ENCODE measurements at regions of chr9 and their contacts with region 1.

Region 1: GRCh38 chr9:127943731-127944144 is 6.1 kb upstream of the DPM2 start:
- DNase-seq: peak; percentile 92
- H3K4me3 ChIP-seq: peak overlapping the region in 1 of 2 experiments; percentile 16; a peak in 1 of 4 replicates
- H3K27ac ChIP-seq: peak overlapping the region in 1 of 2 experiments; percentile 62; a peak in 1 of 4 replicates
- H3K4me1 ChIP-seq: peaks cover 0 to 50% of the 10 kb centered on the region in 2 experiments; a peak in 1 of 4 replicates
- H3K27me3 ChIP-seq: no peaks in the 10 kb centered on the region
- CTCF ChIP-seq: peak; percentile 90
- EP300 ChIP-seq: no peak
- RAD21 ChIP-seq: peak; percentile 91

Region 2: DNA sequence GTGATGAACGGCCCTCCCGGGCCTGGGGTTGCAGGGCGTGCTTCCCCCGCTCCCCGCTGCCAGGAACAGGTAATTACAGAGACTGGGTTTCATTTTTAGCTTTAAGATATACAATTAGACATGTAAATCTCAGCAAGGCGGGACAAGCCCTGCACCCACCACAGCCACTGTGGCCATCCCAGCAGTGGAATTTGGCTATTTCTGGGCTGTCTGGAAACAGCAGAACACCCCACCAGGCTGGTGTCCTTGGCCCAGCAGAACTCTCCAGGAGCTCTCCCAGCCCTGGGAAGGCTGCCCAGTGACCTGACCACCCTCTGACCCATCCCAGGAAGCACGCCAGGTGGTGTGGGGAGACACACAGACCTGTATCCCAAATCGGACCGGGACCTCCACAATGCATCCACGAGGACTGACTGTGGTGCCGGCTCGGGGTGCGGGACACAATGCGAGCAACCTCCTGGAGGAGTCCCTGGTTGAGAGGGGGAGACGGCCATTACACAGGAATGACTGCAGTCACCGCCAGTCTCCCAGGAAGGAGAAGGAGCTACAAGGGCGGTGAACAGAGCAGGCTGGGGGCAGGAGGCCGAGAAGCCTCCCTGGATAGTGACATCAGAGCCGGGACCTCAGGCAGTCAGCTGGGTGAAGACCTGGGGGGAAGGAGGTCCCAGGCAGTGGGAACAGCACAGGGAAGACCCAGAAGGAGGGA is 19.8 kb after region 1 on chr9:
- CTCF ChIA-PET with region 1: interaction called, 106 read pairs
- POLR2A ChIA-PET with region 1: interaction called, 3 read pairs
- DNase-seq: no peak
- H3K4me3 ChIP-seq: no peak overlapping the region
- H3K27ac ChIP-seq: peak overlapping the region in 1 of 2 experiments; percentile 72; a peak in 3 of 4 replicates
- H3K4me1 ChIP-seq: peaks cover 56 to 80% of the 10 kb centered on the region in 2 experiments
- H3K27me3 ChIP-seq: no peaks in the 10 kb centered on the region
- CTCF ChIP-seq: no peak
- EP300 ChIP-seq: no peak
- RAD21 ChIP-seq: no peak

Region 3: GRCh38 chr9:127980706-127981558 is 37.2 kb after region 1 on chr9 and contains the start of gene EEIG1:
- CTCF ChIA-PET with region 1: interaction called, 60 read pairs
- POLR2A ChIA-PET with region 1: interaction called, 3 read pairs
- DNase-seq: peak; percentile 98
- H3K4me3 ChIP-seq: peak within 1 kb of the TSS; percentile 72 to 96
- H3K27ac ChIP-seq: peak within 1 kb of the TSS; percentile 77 to 81
- H3K4me1 ChIP-seq: peaks cover 16 to 39% of the 10 kb centered on the region in 2 experiments; a peak in 3 of 4 replicates
- H3K27me3 ChIP-seq: no peaks in the 10 kb centered on the region
- CTCF ChIP-seq: no peak
- EP300 ChIP-seq: no peak
- RAD21 ChIP-seq: no peak
- polyA plus RNA-seq, gene EEIG1: 17.9 and 26.2 TPM in 2 replicates

Region 4: GRCh38 chr9:128007566-128008138 is 63.9 kb after region 1 on chr9:
- CTCF ChIA-PET with region 1: interaction called, 19 read pairs
- POLR2A ChIA-PET with region 1: no interaction called
- DNase-seq: peak; percentile 30
- H3K4me3 ChIP-seq: no peak overlapping the region
- H3K27ac ChIP-seq: peak overlapping the region; percentile 27 to 41; a peak in 3 of 4 replicates
- H3K4me1 ChIP-seq: peaks cover 9 to 23% of the 10 kb centered on the region in 2 experiments; a peak in 3 of 4 replicates
- H3K27me3 ChIP-seq: no peaks in the 10 kb centered on the region
- CTCF ChIP-seq: no peak
- EP300 ChIP-seq: no peak
- RAD21 ChIP-seq: no peak

Region 5: GRCh38 chr9:128045831-128046230 is 102.1 kb after region 1 on chr9:
- CTCF ChIA-PET with region 1: interaction called, 219 read pairs
- POLR2A ChIA-PET with region 1: no interaction called
- DNase-seq: peak; percentile 39
- H3K4me3 ChIP-seq: no peak overlapping the region
- H3K27ac ChIP-seq: peak overlapping the region; percentile 28 to 79; a peak in 3 of 4 replicates
- H3K4me1 ChIP-seq: peaks cover 5 to 19% of the 10 kb centered on the region in 2 experiments; a peak in 3 of 4 replicates
- H3K27me3 ChIP-seq: no peaks in the 10 kb centered on the region
- CTCF ChIP-seq: no peak
- EP300 ChIP-seq: no peak; a peak in 1 of 4 replicates
- RAD21 ChIP-seq: no peak

Region 6: GRCh38 chr9:128082151-128082550 is 138.4 kb after region 1 on chr9:
- CTCF ChIA-PET with region 1: interaction called, 17 read pairs
- POLR2A ChIA-PET with region 1: no interaction called
- DNase-seq: no peak
- H3K4me3 ChIP-seq: no peak overlapping the region
- H3K27ac ChIP-seq: peak overlapping the region in 1 of 2 experiments; percentile 82; a peak in 1 of 4 replicates
- H3K4me1 ChIP-seq: peaks cover 7 to 33% of the 10 kb centered on the region in 2 experiments; a peak in 2 of 4 replicates
- H3K27me3 ChIP-seq: no peaks in the 10 kb centered on the region
- CTCF ChIP-seq: no peak
- EP300 ChIP-seq: no peak
- RAD21 ChIP-seq: no peak

Region 7: GRCh38 chr9:128203024-128203706 is 259.4 kb after region 1 on chr9 and contains the start of gene DNM1:
- CTCF ChIA-PET with region 1: no interaction called
- POLR2A ChIA-PET with region 1: no interaction called
- DNase-seq: peak; percentile 99
- H3K4me3 ChIP-seq: peak within 1 kb of the TSS; percentile 64 to 76
- H3K27ac ChIP-seq: peak within 1 kb of the TSS; percentile 48 to 84; a peak in 3 of 4 replicates
- H3K4me1 ChIP-seq: peaks cover 0 to 20% of the 10 kb centered on the region in 2 experiments; a peak in 1 of 4 replicates
- H3K27me3 ChIP-seq: no peaks in the 10 kb centered on the region
- CTCF ChIP-seq: peak; percentile 63
- EP300 ChIP-seq: no peak
- RAD21 ChIP-seq: peak; percentile 20; the same call in 1 of the 2 replicates
- polyA plus RNA-seq, gene DNM1: 31.0 and 35.7 TPM in 2 replicates

Measured in SK-N-SH (cell line).